Right ventricle myocardium superior (tissue), 1 donor: ENCODE measurements at regions of chr5 and their contacts with region 1.

Region 1: DNA sequence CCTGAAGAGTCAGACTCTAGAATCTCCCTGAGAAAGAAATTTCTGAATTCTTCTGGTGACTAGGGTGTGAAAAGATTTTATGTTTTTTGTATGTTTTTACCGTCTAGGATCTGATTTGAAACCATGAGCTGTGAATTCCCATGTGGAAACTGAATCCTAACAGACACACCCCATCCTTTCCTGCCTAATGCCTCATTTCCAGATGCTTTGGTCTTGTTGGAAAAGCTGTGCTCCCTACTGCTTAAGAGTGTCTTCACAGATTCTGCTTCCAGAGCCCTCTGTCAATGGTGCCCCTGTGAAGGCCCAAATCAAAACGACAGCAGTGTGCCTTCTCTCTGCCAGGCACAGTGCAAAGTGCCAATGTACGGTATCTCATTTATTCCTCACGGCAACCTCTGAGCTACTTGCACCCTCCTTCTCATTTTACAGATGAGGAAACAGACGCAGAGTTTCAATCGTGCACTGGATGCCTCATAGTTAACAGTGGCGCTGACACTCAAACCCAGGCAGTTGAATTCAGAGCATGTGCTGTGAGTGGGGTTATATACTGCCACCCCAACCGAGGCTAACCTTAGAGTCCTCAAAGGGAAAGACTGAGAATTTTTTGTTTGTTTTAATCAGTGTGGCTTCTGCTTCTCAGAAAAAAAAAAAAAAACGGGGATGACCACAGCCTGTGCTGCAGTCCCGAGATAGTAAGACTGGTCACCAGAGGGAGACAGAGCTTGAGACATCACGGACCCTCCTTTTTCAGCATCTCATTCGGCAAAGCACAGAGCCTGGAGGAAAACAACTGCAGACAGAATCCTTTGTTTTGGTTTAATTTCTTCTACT is 188.4 kb downstream of the SNCAIP start:
- DNase-seq: no peak
- ATAC-seq: peak; percentile 82

Region 2: DNA sequence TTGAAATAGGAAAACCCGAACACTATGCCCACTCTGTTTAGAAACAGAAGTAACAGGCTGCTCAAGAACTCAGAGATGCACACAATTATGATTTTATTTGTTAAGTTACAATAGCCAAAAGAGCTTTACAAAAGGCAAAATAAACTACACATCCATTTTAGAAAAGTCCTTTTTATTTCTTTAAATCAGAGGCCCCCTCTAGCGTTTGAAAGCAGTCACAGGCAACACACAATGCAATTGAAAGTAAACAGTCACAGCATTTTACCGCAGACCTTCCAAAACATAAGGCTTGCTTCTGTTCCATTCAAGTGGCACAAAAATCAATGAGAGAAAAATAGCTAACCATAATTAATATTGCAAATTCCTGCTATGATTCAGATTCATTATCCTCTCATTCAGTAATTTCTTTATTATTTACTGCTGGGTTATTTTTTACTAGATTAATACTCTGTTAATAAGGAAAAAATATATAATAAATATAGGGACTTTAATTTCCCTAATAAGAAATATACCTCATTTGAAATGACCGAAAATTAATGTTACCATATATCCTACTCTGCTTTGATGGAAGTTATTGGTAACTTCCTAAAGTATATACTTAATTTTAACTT is 844.5 kb after region 1 on chr5:
- intact Hi-C with region 1: loop called (anchors 10 kb)
- DNase-seq: no peak
- ATAC-seq: peak; percentile 65